ENCODE measurements at regions of chr7 and their contacts with region 1.

Region 1: DNA sequence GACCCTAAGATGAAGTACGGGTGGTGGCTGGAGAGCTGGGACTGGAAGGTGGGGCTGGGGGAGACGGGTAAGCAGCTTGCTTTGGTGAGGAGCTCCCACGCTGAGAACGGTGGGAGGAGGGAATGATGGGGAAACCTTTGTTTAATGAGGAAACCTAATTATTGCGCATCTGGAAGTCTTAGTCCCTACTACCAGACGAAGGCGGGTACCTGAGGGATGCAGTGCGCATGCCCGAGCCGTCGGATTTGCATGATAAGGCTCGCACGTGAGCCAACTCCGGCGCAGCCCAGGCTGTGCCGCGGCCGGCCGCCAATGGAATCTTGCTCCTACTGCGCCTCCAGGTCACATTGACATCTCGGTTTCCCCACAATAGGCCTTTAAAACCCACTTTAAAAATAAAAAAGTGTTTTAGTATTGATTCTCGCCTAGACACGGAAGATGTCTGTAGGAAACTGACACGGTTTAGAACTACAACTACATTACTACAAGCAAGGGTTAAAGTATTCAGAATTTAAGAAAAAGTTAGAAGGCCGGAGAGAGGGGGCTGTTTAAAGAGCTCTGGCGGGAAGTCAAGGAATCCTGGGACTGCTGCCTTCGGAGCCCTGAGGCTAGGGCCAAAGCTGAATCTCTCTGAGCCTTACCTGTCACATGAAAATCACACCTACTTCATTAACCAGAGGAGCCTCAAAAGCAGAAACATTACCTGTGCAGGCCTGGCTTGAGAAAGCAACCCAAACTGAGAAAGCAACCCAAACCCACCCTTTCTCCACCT is 12.1 kb upstream of the DLX6 start:
- DNase-seq: no peak
- H3K4me3 Mint-ChIP-seq: no peak overlapping the region
- H3K27ac Mint-ChIP-seq: no peak overlapping the region
- H3K4me1 Mint-ChIP-seq: peaks cover 2% of the 10 kb centered on the region
- H3K27me3 Mint-ChIP-seq: peaks cover 87% of the 10 kb centered on the region

Region 2: DNA sequence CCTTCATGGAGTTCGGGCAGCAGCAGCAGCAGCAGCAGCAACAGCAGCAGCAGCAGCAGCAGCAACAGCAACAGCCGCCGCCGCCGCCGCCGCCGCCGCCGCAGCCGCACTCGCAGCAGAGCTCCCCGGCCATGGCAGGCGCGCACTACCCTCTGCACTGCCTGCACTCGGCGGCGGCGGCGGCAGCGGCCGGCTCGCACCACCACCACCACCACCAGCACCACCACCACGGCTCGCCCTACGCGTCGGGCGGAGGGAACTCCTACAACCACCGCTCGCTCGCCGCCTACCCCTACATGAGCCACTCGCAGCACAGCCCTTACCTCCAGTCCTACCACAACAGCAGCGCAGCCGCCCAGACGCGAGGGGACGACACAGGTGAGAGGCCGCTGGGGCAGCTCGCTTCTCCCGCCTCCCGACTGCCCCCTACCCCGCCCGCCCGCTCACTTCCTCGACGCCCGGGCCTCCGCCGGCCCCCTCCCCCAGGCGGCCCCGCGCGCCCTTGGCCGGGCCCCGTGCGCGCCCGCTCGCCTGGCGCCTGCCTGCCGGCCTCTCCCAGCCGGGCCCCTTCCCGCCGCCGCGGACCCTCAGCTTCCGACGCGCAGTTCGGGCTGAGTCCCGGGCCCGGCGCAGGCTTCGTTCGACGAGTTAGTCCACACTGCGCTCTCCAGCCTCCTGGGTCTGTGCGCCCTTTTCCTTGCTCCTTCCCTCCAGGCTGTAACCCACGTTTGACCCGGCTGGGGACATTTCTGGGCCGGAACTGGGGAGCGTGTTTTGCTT is 12.9 kb after region 1 on chr7:
- intact Hi-C with region 1: loop called (anchors 2 kb)
- DNase-seq: peak; percentile 73
- H3K4me3 Mint-ChIP-seq: peak overlapping the region; percentile 73
- H3K27ac Mint-ChIP-seq: peak overlapping the region; percentile 34
- H3K4me1 Mint-ChIP-seq: peaks cover 8% of the 10 kb centered on the region
- H3K27me3 Mint-ChIP-seq: peaks cover 80% of the 10 kb centered on the region

Region 3: GRCh38 chr7:97731736-97732564 is 738.7 kb after region 1 on chr7 and contains the start of gene TAC1:
- intact Hi-C with region 1: loop called (anchors 5 kb)
- DNase-seq: no peak
- H3K4me3 Mint-ChIP-seq: no peak within 1 kb of the TSS
- H3K27ac Mint-ChIP-seq: peak within 1 kb of the TSS; percentile 13
- H3K4me1 Mint-ChIP-seq: peaks cover 6% of the 10 kb centered on the region
- H3K27me3 Mint-ChIP-seq: peaks cover 55% of the 10 kb centered on the region
- total RNA-seq, gene TAC1: 0.28 TPM in 1 of 2 replicates, not detected in the other

Measured in activated CD4-positive, alpha-beta T cell treated with anti-CD3 and anti-CD28 coated beads, Interleukin-2, amount 10 ng/mL, durations not matched to agents 24 days and 14 days (primary cell).